Endothelial cell of umbilical vein (primary cell): ENCODE measurements at regions of chr14 and their contacts with region 1.

Region 1: DNA sequence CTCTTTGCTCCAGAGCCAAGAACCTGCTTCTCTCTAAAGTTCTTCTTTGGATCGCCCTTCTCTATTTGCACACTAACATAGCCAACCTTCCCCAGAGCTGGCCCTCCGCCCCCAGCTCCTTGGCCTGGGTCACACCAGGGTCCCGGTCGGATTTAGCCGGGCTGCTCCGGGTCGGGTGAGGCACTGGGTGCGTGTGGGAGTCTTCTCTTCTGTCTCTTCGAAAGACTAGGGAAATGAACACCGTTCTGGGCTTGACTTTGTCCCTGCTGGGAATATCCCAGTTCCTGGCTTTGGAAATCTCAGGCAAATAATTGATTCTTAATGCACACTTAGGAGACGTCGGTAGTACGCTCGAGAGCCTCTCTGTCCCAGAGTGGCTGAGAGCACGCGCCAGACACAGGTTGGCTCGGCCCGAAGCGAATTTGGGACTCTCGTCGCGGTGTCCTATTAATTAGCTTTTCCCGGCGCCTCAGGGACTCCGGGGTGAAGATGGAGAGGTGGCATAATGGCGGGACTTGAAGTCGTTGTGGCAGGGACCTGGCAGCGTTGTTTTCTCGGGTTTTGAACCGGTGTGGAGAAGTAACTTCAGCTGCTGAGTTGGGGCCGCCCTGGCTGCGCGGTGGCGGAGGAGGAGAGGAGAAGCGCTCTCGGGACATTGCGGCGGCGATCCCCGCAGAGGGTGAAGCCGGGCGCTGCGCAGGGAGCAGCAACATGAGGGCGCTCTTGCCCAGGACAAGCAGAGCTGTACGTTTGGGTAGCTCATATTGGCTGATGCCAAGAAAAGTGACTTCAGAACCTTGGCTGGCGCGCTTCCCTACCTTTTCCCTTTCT is 7.5 kb downstream of the FOXG1 start:
- DNase-seq: no peak
- H3K4me3 ChIP-seq: no peak overlapping the region
- H3K27ac ChIP-seq: no peak overlapping the region
- H3K4me1 ChIP-seq: no peaks in the 10 kb centered on the region
- H3K27me3 ChIP-seq: peaks cover 49 to 100% of the 10 kb centered on the region in 2 experiments
- CTCF ChIP-seq: peak; percentile 23 to 36
- POLR2A ChIP-seq: no peak

Region 2: DNA sequence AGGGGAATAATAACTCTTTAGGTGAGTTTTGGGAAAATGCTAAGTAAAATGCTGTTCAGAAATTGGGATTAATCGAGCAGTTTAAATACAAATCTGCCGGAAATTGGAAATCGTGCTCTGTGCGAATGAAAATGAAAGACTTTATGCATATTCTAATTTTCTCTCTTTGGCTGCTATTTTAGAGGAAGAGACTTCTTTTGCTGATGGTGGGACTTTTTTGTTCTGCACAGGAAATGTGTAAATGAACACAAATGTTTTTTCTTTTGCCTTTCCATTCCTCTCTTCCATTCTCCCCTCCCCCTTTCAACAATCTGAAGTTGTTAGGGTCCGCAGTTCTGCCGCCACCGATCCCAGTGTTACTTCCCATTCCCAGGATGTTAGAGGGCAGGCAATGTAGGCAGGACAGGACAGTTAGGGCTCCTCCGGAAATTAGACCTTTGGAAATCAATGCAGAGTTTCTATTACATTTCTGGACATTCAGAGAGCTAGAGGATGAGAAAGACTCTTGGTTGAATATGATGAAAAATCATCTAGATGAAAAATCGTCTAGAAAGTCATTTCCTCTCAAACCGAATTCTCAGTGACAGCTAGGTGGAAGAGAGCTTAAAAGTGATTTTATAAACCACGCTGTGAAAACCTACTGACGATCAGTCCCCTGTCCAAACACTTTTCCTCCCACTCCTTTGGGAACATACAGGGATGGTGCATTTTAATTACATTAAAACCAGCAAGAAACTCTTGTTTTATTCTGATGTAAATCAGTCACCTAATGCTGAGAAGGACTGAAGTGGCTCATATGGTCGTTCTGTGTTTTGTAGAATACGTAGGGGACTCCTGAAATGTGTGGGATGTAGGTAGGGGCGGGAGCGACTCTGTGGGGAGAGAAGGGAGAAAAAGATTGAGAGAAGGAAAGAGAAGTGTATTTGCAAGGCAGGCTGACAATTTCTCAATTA is 10.3 kb after region 1 on chr14:
- CTCF ChIA-PET with region 1: interaction called, 11 read pairs
- POLR2A ChIA-PET with region 1: no interaction called
- dilution Hi-C with region 1: no loop called
- intact Hi-C with region 1: no loop called
- DNase-seq: no peak
- H3K4me3 ChIP-seq: no peak overlapping the region
- H3K27ac ChIP-seq: no peak overlapping the region
- H3K4me1 ChIP-seq: peaks cover 4% of the 10 kb centered on the region
- H3K27me3 ChIP-seq: peaks cover 24 to 68% of the 10 kb centered on the region in 2 experiments
- CTCF ChIP-seq: no peak
- POLR2A ChIP-seq: no peak

Region 3: GRCh38 chr14:29463727-29464395 is 689.8 kb after region 1 on chr14:
- CTCF ChIA-PET with region 1: interaction called, 8 read pairs
- POLR2A ChIA-PET with region 1: no interaction called
- dilution Hi-C with region 1: no loop called
- intact Hi-C with region 1: loop called (anchors 5 kb)
- DNase-seq: no peak
- H3K4me3 ChIP-seq: no peak overlapping the region
- H3K27ac ChIP-seq: no peak overlapping the region
- H3K4me1 ChIP-seq: no peaks in the 10 kb centered on the region
- H3K27me3 ChIP-seq: peaks cover 0 to 2% of the 10 kb centered on the region in 2 experiments
- CTCF ChIP-seq: no peak
- POLR2A ChIP-seq: no peak

Region 4: GRCh38 chr14:29521526-29522137 is 747.6 kb after region 1 on chr14:
- CTCF ChIA-PET with region 1: interaction called, 34 read pairs
- POLR2A ChIA-PET with region 1: no interaction called
- dilution Hi-C with region 1: no loop called
- intact Hi-C with region 1: no loop called
- DNase-seq: peak; percentile 6
- H3K4me3 ChIP-seq: no peak overlapping the region
- H3K27ac ChIP-seq: no peak overlapping the region
- H3K4me1 ChIP-seq: no peaks in the 10 kb centered on the region
- H3K27me3 ChIP-seq: no peaks in the 10 kb centered on the region
- CTCF ChIP-seq: peak; percentile 28 to 42
- POLR2A ChIP-seq: no peak

Region 5: DNA sequence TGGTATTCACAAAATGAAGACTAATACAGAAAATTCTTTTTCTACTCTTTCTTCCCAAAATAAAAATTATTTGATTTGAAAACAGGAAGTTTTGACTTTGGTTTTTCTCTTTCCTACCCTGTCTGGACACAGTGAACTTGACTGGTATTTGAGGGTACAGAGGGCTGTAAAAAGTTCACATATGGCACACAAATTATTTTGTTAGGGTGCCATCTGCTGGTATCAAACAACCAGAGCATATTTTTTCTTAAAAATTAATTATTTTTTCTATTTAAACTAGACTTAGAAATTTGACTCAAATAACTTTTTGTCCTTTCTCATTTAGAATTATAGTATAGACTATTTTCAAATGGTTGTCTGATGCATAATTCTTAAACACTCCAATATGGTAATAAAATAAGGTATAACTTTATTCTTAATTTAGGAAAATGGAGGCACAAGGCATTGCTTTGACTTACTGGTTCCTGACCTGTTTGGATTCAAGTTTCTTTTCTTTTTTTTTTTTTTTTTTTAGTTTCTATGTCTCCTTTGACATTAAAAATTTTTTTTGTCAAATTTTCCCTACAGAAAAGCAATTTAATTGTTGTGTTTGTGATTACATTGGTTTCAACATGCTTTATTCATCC is 762.9 kb after region 1 on chr14:
- CTCF ChIA-PET with region 1: interaction called, 97 read pairs
- POLR2A ChIA-PET with region 1: no interaction called
- dilution Hi-C with region 1: no loop called
- intact Hi-C with region 1: loop called (anchors 1 kb)
- DNase-seq: peak; percentile 33
- H3K4me3 ChIP-seq: no peak overlapping the region
- H3K27ac ChIP-seq: no peak overlapping the region
- H3K4me1 ChIP-seq: no peaks in the 10 kb centered on the region
- H3K27me3 ChIP-seq: peaks cover 4 to 23% of the 10 kb centered on the region in 2 experiments
- CTCF ChIP-seq: peak; percentile 4 to 8
- POLR2A ChIP-seq: no peak